ENCODE measurements at regions of chr1 and their contacts with region 1.

Region 1: GRCh38 chr1:212994926-212995325 is 20.7 kb downstream of the ANGEL2 start:
- DNase-seq: no peak
- H3K4me3 ChIP-seq: no peak overlapping the region
- H3K27ac ChIP-seq: no peak overlapping the region
- H3K4me1 ChIP-seq: no peaks in the 10 kb centered on the region
- H3K27me3 ChIP-seq: no peaks in the 10 kb centered on the region

Region 2: DNA sequence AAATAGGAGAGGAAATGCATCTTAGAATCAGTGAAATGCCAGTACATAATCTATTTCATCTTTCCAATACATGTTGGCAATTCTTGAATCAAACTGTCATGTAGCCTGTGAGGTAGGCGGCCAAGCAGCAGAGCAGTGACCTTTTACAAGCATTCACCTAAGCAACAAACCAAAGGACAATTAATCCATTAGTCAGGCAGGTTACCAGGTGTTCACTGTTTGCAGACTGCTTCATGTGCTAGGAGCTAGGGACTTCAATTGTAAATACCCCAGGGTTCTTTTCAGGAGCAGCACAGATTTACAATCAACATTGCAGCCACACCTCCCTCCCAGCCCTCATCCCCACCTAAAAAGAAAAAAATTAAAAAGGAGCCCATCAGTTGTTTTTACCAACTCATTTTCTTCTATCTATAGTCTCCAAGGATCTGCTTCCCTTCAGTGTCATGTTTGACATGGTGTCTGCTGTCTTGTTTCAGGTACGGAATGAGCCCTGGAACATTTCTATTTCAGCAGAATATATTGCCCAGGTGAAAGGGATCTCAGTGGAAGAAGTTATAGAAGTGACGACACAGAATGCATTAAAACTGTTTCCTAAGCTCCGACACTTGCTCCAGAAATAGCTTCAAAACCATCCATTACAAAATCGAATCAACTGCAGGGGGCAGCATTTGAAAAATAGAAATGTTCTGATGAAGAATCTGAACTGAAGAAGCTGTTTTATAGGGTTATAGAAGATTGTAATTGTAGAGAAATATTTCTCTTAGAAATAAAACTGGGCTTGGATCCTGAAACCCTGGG is 180.2 kb before region 1 on chr1:
- CTCF ChIA-PET with region 1: interaction called, 16 read pairs
- POLR2A ChIA-PET with region 1: no interaction called
- DNase-seq: peak in 2 of 3 donors; percentile 52 to 64
- H3K4me3 ChIP-seq: no peak overlapping the region
- H3K27ac ChIP-seq: no peak overlapping the region
- H3K4me1 ChIP-seq: peaks cover 0 to 11% (median 8%) of the 10 kb centered on the region in 4 experiments
- H3K27me3 ChIP-seq: no peaks in the 10 kb centered on the region

Measured in common myeloid progenitor, CD34-positive (primary cell).